ENCODE measurements at regions of chr21 and their contacts with region 1.

Region 1: GRCh38 chr21:14864211-14865021 is 200.4 kb downstream of the NRIP1 start:
- DNase-seq: peak in 1 of 2 experiments; percentile 58
- H3K4me3 ChIP-seq: no peak overlapping the region
- H3K27ac ChIP-seq: no peak overlapping the region
- H3K4me1 ChIP-seq: no peaks in the 10 kb centered on the region; the same call in 1 of the 2 replicates
- H3K27me3 ChIP-seq: no peaks in the 10 kb centered on the region
- CTCF ChIP-seq: 0 out of 2 replicates have a peak, but pooled peaks have one; percentile 28

Region 2: GRCh38 chr21:14403681-14404318 is 460.6 kb before region 1 on chr21:
- CTCF ChIA-PET with region 1: no interaction called
- POLR2A ChIA-PET with region 1: no interaction called
- intact Hi-C with region 1: loop called (anchors 5 kb)
- DNase-seq: no peak
- H3K4me3 ChIP-seq: no peak overlapping the region
- H3K27ac ChIP-seq: no peak overlapping the region
- H3K4me1 ChIP-seq: no peaks in the 10 kb centered on the region
- H3K27me3 ChIP-seq: no peaks in the 10 kb centered on the region
- CTCF ChIP-seq: peak; percentile 77

Region 3: GRCh38 chr21:14753466-14754258 is 110.8 kb before region 1 on chr21:
- CTCF ChIA-PET with region 1: no interaction called
- POLR2A ChIA-PET with region 1: no interaction called
- intact Hi-C with region 1: no loop called
- DNase-seq: no peak
- H3K4me3 ChIP-seq: no peak overlapping the region
- H3K27ac ChIP-seq: no peak overlapping the region
- H3K4me1 ChIP-seq: no peaks in the 10 kb centered on the region
- H3K27me3 ChIP-seq: no peaks in the 10 kb centered on the region
- CTCF ChIP-seq: no peak

Region 4: DNA sequence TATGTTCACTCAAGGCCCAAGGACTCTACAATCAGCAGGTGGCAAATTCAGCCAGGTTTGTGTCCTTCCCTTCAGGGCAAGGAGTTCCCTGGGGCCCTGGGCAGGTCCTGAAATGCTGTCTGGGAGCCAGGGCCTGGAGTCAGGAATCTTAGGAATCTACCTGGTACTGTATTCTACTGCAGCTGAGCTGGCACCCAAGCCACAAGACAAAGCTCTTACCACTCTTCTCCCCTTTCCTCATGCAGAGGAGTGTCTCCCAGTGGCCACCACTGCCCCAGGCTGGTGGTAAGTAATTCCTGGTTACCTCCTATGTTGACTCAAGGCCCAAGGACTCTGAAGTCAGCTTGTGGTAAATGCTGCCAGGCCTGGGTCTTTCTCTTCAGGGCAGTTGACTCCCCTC is 46.9 kb after region 1 on chr21:
- CTCF ChIA-PET with region 1: no interaction called
- POLR2A ChIA-PET with region 1: no interaction called
- intact Hi-C with region 1: loop called (anchors 5 kb)
- DNase-seq: peak; percentile 81 to 90
- H3K4me3 ChIP-seq: no peak overlapping the region
- H3K27ac ChIP-seq: peak overlapping the region; percentile 72
- H3K4me1 ChIP-seq: peaks cover 50% of the 10 kb centered on the region
- H3K27me3 ChIP-seq: no peaks in the 10 kb centered on the region
- CTCF ChIP-seq: no peak

Region 5: GRCh38 chr21:14977814-14978213 is 113.4 kb after region 1 on chr21:
- CTCF ChIA-PET with region 1: no interaction called
- POLR2A ChIA-PET with region 1: no interaction called
- intact Hi-C with region 1: no loop called
- DNase-seq: no peak
- H3K4me3 ChIP-seq: no peak overlapping the region
- H3K27ac ChIP-seq: no peak overlapping the region
- H3K4me1 ChIP-seq: no peaks in the 10 kb centered on the region
- H3K27me3 ChIP-seq: no peaks in the 10 kb centered on the region
- CTCF ChIP-seq: no peak

Region 6: DNA sequence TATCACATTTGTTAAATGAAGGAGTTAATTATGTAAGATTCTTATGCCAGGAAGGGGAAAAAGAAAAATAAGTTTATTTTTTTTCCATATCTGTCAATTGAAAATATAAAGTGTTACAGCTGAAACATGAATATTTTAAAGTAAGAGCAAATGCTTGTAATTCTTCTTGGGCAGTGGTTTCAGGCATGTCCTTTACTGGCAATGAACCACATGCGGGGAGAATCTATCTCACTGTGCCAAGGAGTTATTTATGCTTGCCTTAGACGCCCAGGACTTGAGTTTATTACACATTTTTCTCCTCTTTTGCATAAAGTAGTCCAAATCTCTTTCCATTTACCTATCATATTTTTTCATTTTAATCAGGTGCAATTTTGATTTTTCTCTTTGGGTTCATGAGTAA is 408.2 kb after region 1 on chr21:
- CTCF ChIA-PET with region 1: no interaction called
- POLR2A ChIA-PET with region 1: no interaction called
- intact Hi-C with region 1: loop called (anchors 5 kb)
- DNase-seq: peak in 1 of 2 experiments; percentile 10
- H3K4me3 ChIP-seq: no peak overlapping the region
- H3K27ac ChIP-seq: peak overlapping the region; percentile 45
- H3K4me1 ChIP-seq: peaks cover 40% of the 10 kb centered on the region
- H3K27me3 ChIP-seq: no peaks in the 10 kb centered on the region
- CTCF ChIP-seq: no peak

Region 7: DNA sequence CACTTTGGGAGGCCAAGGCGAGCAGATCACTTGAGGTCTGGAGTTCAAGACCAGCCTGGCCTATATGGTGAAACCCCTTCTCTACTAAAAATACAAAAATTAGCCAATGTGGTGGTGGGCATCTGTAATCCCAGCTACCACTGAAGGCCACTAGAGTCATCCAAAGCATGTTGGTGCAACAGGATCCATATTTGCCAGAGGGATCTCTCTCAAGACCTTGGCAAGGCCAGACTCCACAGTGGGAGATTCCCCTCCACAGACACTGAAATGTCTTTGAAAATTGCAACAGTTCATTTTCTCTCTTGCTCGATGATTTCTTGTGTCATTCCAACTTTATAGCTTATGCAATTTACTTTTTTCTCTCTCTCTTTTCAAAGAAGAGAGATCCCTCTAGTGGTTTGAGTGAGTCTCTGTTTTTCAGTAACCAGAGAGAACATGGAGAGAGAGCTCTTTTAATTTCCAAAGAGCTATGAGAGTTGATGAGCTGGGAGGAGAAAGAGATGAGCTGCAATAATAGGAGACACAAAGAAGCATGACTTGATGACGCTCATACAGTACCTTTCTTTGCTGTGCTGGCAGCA is 688.6 kb after region 1 on chr21:
- CTCF ChIA-PET with region 1: interaction called, 3 read pairs
- POLR2A ChIA-PET with region 1: no interaction called
- intact Hi-C with region 1: loop called (anchors 2 kb)
- DNase-seq: peak in 1 of 2 experiments; percentile 37
- H3K4me3 ChIP-seq: no peak overlapping the region
- H3K27ac ChIP-seq: no peak overlapping the region
- H3K4me1 ChIP-seq: no peaks in the 10 kb centered on the region
- H3K27me3 ChIP-seq: no peaks in the 10 kb centered on the region
- CTCF ChIP-seq: peak; percentile 66

Measured in PC-9 (cell line).